ENCODE measurements at regions of chr19 and their contacts with region 1.

Region 1: DNA sequence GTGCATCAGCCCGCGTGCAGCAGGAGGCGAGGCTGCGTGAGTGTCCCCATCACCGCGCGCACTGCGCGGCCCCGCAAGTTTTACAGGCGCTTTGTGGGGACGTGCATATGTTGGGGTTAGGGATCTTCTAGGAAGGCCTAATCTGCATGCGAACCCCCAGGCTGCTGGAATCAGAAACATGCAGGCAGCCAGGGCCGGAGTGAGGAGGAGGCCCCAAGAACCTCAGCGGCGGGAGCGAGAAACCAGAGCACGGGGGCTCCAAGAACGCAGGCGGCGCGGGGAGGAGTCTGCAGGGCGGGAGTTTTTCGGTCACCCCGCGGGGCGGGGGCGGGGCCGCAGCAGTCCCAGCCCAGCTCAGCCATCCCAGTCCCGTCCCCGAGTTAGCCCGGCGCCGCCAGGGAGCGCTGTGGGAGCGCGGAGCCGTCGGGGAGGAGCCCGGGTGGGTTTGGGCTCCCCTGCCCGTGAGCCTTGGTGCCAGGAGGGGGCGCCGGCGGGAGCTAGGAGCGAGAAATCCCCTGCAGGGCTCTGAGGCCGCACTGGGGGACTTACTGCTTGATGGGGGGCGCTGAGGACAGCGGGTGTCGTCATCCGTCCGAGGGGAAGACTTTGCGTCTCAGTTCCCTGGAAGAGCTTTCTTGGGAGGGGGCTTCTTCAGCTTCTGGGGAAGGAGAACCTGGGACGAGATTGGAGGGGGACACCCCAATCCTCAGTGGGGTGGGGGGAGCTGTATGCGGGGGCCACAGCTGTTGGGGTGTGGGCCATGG is 933 bp upstream of the NRTN start:
- DNase-seq: peak; percentile 74
- H3K4me3 ChIP-seq: peak overlapping the region; percentile 44
- H3K27ac ChIP-seq: no peak overlapping the region
- H3K27me3 ChIP-seq: peaks cover 49% of the 10 kb centered on the region
- CTCF ChIP-seq: peak; percentile 97

Region 2: GRCh38 chr19:5775668-5776309 is 28.1 kb before region 1 on chr19:
- CTCF ChIA-PET with region 1: interaction called, 10 read pairs
- POLR2A ChIA-PET with region 1: no interaction called
- DNase-seq: no peak
- H3K4me3 ChIP-seq: no peak overlapping the region
- H3K27ac ChIP-seq: no peak overlapping the region
- H3K27me3 ChIP-seq: peaks cover 4% of the 10 kb centered on the region
- CTCF ChIP-seq: no peak

Region 3: GRCh38 chr19:5827891-5828660 is 24.1 kb after region 1 on chr19:
- CTCF ChIA-PET with region 1: interaction called, 25 read pairs
- POLR2A ChIA-PET with region 1: interaction called, 9 read pairs
- DNase-seq: peak; percentile 73
- H3K4me3 ChIP-seq: peak overlapping the region; percentile 79
- H3K27ac ChIP-seq: peak overlapping the region; percentile 77
- H3K27me3 ChIP-seq: peaks cover 2% of the 10 kb centered on the region
- CTCF ChIP-seq: no peak

Region 4: DNA sequence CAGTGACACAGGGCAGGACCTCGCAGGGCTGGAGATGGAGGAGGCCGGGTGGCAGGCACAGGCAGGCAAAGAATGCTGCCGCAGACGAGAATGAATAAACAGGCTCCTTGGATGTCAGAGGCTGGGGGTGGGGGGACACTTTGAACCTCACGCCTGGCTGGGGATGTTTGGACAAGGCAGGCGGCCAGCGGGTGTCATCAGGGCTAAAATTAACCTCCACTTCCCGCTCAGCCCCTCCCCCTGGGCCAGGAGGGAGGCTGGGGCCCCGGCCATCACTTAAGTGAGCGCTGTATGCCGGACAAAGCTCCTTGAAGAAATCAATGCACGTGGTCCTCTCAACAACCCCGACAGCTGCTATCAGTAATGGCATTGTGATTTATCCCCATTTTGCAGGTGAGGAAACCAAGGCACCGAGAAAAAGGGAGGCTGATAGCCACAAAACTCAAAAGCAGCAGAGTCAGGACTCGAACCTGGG is 76.7 kb after region 1 on chr19:
- CTCF ChIA-PET with region 1: interaction called, 20 read pairs
- POLR2A ChIA-PET with region 1: no interaction called
- DNase-seq: peak; percentile 62
- H3K4me3 ChIP-seq: no peak overlapping the region
- H3K27ac ChIP-seq: peak overlapping the region; percentile 11
- H3K27me3 ChIP-seq: peaks cover 6% of the 10 kb centered on the region
- CTCF ChIP-seq: no peak

Region 5: DNA sequence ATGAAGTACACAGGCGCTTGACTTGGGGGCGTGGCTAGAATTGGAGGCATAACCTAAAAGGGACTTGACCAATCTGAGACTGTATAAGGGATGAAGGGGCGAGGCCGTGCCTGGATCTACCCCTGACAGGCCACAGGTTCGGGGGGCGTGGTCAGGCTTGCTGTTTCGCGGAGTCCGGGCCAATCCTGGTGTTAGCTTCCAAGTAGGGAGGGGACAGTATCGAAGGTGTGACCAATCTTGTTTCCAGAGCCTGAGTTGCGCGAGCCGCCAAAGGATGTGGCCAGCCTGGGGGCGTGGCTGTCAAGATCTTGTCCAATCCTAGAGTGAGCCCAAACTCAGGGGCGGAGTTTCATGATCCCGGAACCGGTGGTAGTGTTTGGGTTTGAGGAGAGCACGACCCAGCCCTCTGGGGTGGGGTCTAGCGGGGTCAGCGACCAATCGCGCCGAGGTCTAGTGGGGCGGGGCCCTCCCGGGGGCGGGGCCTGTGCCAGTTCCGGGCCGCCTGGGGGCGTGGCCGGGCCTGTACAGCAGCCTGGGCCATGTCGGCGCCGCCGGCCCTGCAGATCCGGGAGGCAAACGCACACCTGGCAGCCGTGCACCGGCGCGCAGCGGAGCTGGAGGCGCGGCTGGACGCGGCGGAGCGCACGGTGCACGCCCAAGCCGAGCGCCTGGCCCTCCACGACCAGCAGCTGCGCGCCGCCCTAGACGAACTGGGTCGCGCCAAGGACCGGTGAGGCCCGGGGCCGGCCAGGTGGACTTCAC is 100.6 kb after region 1 on chr19 and contains the start of gene VMAC:
- CTCF ChIA-PET with region 1: interaction called, 54 read pairs
- POLR2A ChIA-PET with region 1: interaction called, 15 read pairs
- DNase-seq: peak; percentile 100
- H3K4me3 ChIP-seq: peak within 1 kb of the TSS; percentile 86
- H3K27ac ChIP-seq: peak within 1 kb of the TSS; percentile 96
- H3K27me3 ChIP-seq: no peaks in the 10 kb centered on the region
- CTCF ChIP-seq: no peak
- polyA plus RNA-seq, gene VMAC: 2.5 and 2.6 TPM in 2 replicates

Region 6: DNA sequence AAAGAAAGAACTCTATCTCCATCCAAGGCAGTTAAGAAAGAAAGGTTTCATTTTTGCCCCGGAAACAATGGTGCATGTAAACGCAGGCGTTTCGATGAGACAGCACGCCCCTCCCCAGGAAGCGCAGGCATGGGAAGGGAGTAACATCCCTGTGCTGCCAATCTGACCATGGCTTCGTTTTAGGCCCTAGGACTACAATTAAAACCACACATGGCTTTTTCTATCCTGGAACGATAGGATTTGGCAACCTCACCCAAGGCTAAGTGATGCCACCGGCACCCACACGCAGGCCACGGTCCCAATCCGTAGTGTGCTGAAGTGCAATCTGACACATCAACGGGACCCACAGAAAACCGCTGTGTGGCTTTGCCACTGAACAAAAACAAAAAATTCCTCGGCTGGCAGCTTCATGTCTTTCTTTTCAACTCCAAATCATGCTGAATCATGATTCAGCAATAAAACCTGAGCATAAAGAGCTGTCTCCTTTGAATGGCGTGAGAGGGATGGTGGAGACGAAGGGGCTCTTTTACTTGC is 149.8 kb after region 1 on chr19:
- CTCF ChIA-PET with region 1: interaction called, 14 read pairs
- POLR2A ChIA-PET with region 1: no interaction called
- DNase-seq: no peak
- H3K4me3 ChIP-seq: no peak overlapping the region
- H3K27ac ChIP-seq: peak overlapping the region; percentile 89
- H3K27me3 ChIP-seq: no peaks in the 10 kb centered on the region
- CTCF ChIP-seq: no peak

Region 7: DNA sequence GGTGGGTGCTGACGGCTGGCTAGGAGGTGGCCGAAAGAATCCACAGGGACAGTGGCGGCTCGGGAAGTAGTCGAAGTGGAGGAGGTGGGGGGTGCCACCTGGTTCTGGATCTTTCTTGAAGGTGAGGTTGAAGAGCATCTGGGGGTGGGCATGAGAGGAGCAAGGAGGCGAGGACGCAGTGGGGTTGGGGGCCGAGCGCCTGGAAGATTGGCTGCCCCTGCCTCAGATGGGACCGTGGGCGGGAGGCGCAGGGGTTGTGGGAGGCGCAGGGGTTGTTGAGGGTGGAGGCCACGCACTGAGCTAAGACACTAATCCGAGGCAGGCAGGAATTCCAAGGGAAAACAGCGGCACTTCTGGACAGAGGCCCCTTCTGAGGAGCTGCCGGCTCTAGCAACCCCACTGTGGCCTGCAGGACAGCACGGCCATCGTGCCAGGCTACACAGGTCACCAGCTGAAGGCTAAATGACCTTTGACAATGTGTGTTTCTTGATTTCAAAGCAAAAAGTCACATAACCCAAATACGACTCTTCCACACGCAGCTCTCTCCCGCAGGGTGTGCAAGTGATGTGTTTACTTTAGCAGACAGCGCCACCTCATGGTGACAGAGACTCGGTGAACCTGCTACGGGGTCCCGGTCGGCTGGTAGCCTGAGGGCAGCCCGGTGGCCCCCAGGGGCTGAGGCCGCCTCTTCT is 218.1 kb after region 1 on chr19:
- CTCF ChIA-PET with region 1: interaction called, 27 read pairs
- POLR2A ChIA-PET with region 1: interaction called, 3 read pairs
- DNase-seq: peak; percentile 21
- H3K4me3 ChIP-seq: no peak overlapping the region
- H3K27ac ChIP-seq: no peak overlapping the region
- H3K27me3 ChIP-seq: peaks cover 4% of the 10 kb centered on the region
- CTCF ChIP-seq: peak; percentile 60

Measured in AG04450 (cell line).